Dendritic cell treated with granulocyte-macrophage colony-stimulating factor and Interleukin-4, amounts not matched to agents 40 ng/mL and 50 ng/mL, for 4 days (primary cell): ENCODE measurements at regions of chr4 and their contacts with region 1.

Region 1: GRCh38 chr4:15018361-15018760 is 16.1 kb downstream of the CPEB2 start:
- H3K4me3 Mint-ChIP-seq: no peak overlapping the region
- H3K27ac Mint-ChIP-seq: no peak overlapping the region
- H3K4me1 Mint-ChIP-seq: peaks cover 25% of the 10 kb centered on the region
- H3K27me3 Mint-ChIP-seq: no peaks in the 10 kb centered on the region

Region 2: GRCh38 chr4:14607578-14607977 is 410.8 kb before region 1 on chr4:
- intact Hi-C with region 1: no loop called
- H3K4me3 Mint-ChIP-seq: no peak overlapping the region
- H3K27ac Mint-ChIP-seq: no peak overlapping the region
- H3K4me1 Mint-ChIP-seq: no peaks in the 10 kb centered on the region
- H3K27me3 Mint-ChIP-seq: no peaks in the 10 kb centered on the region

Region 3: DNA sequence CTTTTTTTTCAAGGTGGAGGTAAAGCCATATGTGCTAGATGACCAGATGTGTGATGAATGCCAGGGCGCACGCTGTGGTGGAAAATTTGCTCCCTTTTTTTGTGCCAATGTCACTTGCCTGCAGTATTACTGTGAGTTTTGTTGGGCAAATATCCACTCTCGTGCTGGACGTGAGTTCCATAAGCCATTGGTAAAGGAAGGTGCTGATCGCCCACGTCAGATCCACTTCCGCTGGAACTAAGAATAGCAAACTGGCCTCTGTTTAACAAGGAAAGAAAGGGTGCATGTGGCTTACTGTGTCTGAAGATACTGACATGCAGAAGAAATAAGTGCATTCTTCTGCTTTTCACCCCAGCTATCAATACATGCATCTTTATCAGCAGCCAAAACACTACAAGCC is 47.8 kb after region 1 on chr4:
- intact Hi-C with region 1: loop called (anchors 10 kb)
- H3K4me3 Mint-ChIP-seq: no peak overlapping the region
- H3K27ac Mint-ChIP-seq: no peak overlapping the region
- H3K4me1 Mint-ChIP-seq: no peaks in the 10 kb centered on the region
- H3K27me3 Mint-ChIP-seq: no peaks in the 10 kb centered on the region